PC-3 (cell line): ENCODE measurements at regions of chr5 and their contacts with region 1.

Region 1: GRCh38 chr5:148998174-148998797 is 64.6 kb downstream of the SH3TC2 start:
- DNase-seq: peak; percentile 99
- ATAC-seq: peak; percentile 27
- H3K4me3 ChIP-seq: no peak overlapping the region
- H3K27ac ChIP-seq: no peak overlapping the region
- H3K4me1 ChIP-seq: peaks cover 73% of the 10 kb centered on the region
- H3K27me3 ChIP-seq: no peaks in the 10 kb centered on the region
- CTCF ChIP-seq: peak; percentile 99

Region 2: GRCh38 chr5:148826053-148826738 is 172.1 kb before region 1 on chr5 and contains the start of gene ADRB2:
- CTCF ChIA-PET with region 1: interaction called, 8 read pairs
- POLR2A ChIA-PET with region 1: interaction called, 13 read pairs
- intact Hi-C with region 1: loop called (anchors 1 kb)
- DNase-seq: peak; percentile 100
- ATAC-seq: peak; percentile 83
- H3K4me3 ChIP-seq: peak within 1 kb of the TSS; percentile 73
- H3K27ac ChIP-seq: peak within 1 kb of the TSS; percentile 69
- H3K4me1 ChIP-seq: peaks cover 51% of the 10 kb centered on the region
- H3K27me3 ChIP-seq: no peaks in the 10 kb centered on the region
- CTCF ChIP-seq: no peak
- total RNA-seq, gene ADRB2: 41.1 and 42.1 TPM in 2 replicates

Region 3: GRCh38 chr5:148939676-148940075 is 58.6 kb before region 1 on chr5:
- CTCF ChIA-PET with region 1: interaction called, 7 read pairs
- POLR2A ChIA-PET with region 1: no interaction called
- intact Hi-C with region 1: loop called (anchors 1 kb)
- DNase-seq: peak; percentile 100
- ATAC-seq: peak; percentile 90
- H3K4me3 ChIP-seq: no peak overlapping the region
- H3K27ac ChIP-seq: peak overlapping the region; percentile 81
- H3K4me1 ChIP-seq: peaks cover 23% of the 10 kb centered on the region
- H3K27me3 ChIP-seq: no peaks in the 10 kb centered on the region
- CTCF ChIP-seq: no peak

Region 4: GRCh38 chr5:148972958-148973357 is 25.3 kb before region 1 on chr5:
- CTCF ChIA-PET with region 1: interaction called, 5 read pairs
- POLR2A ChIA-PET with region 1: interaction called, 4 read pairs
- intact Hi-C with region 1: loop called (anchors 1 kb)
- DNase-seq: peak; percentile 100
- ATAC-seq: peak; percentile 78
- H3K4me3 ChIP-seq: peak overlapping the region; percentile 17; the same call in 1 of the 2 replicates
- H3K27ac ChIP-seq: peak overlapping the region; percentile 90
- H3K4me1 ChIP-seq: peaks cover 83% of the 10 kb centered on the region
- H3K27me3 ChIP-seq: no peaks in the 10 kb centered on the region
- CTCF ChIP-seq: no peak

Region 5: GRCh38 chr5:149053072-149053695 is 54.9 kb after region 1 on chr5:
- CTCF ChIA-PET with region 1: no interaction called
- POLR2A ChIA-PET with region 1: interaction called, 3 read pairs
- intact Hi-C with region 1: loop called (anchors 1 kb)
- DNase-seq: peak; percentile 99
- ATAC-seq: peak; percentile 93
- H3K4me3 ChIP-seq: peak overlapping the region; percentile 3; the same call in 1 of the 2 replicates
- H3K27ac ChIP-seq: peak overlapping the region; percentile 65
- H3K4me1 ChIP-seq: peaks cover 54% of the 10 kb centered on the region
- H3K27me3 ChIP-seq: no peaks in the 10 kb centered on the region
- CTCF ChIP-seq: peak; percentile 25; the same call in 1 of the 2 replicates

Region 6: DNA sequence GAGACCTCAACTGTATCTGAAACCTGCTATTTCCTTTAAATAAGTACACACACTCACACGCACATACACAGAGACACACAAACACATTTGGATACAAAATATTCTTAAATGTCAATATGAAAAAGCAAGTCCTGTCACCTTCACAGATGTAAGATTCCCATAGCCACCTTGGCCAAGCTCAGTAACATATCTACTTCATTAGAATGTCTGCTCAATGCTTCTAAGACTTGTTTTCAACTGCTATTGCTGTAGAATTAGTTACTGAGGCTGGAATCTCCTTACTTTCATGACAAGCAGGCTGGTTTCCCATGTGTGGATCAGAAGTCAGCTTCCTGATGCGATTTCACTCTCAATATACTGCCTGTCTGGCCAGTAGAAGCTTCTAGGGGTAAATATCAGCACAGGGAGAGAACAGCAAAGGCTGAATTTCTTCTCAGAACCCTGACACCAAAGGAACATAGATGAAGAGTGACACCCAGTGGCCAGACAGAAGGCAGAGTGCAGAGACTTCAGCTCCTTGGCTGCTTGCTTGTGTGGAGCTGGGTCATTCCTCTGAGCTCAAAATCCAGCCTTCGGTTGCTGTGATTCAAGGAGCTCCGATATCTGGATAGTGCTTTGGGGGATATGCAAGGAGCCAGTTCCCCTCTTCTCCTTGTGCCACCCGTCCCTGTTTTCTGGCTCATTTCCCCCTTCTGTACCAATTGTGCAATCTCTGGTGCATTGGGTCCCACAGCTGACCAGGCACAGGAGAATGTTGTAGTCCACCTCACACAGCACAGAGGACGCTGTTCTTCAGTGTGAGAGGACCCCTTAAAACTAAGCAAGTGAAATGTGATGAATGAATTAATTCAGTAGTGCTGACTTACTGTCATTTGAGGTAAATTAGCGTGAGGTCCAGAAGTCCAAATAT is 116.4 kb after region 1 on chr5:
- CTCF ChIA-PET with region 1: interaction called, 36 read pairs
- POLR2A ChIA-PET with region 1: no interaction called
- intact Hi-C with region 1: loop called (anchors 1 kb)
- DNase-seq: peak; percentile 99
- ATAC-seq: peak; percentile 91
- H3K4me3 ChIP-seq: peak overlapping the region; percentile 5; the same call in 1 of the 2 replicates
- H3K27ac ChIP-seq: peak overlapping the region; percentile 53
- H3K4me1 ChIP-seq: peaks cover 55% of the 10 kb centered on the region
- H3K27me3 ChIP-seq: no peaks in the 10 kb centered on the region
- CTCF ChIP-seq: peak; percentile 100